MCF 10A (cell line): ENCODE measurements at regions of chr6 and their contacts with region 1.

Region 1: GRCh38 chr6:43774776-43775534 is 4.9 kb downstream of the VEGFA start:
- DNase-seq: peak; percentile 73
- H3K4me3 Mint-ChIP-seq: peak overlapping the region; percentile 98
- H3K27ac Mint-ChIP-seq: peak overlapping the region; percentile 83
- H3K4me1 Mint-ChIP-seq: peaks cover 43% of the 10 kb centered on the region
- H3K27me3 Mint-ChIP-seq: no peaks in the 10 kb centered on the region
- CTCF ChIP-seq: peak; percentile 79

Region 2: GRCh38 chr6:43723737-43724295 is 51.1 kb before region 1 on chr6:
- CTCF ChIA-PET with region 1: interaction called, 41 read pairs
- POLR2A ChIA-PET with region 1: interaction called, 55 read pairs
- intact Hi-C with region 1: loop called (anchors 1 kb)
- DNase-seq: peak; percentile 90
- H3K4me3 Mint-ChIP-seq: no peak overlapping the region
- H3K27ac Mint-ChIP-seq: no peak overlapping the region
- H3K4me1 Mint-ChIP-seq: peaks cover 31% of the 10 kb centered on the region
- H3K27me3 Mint-ChIP-seq: peaks cover 14% of the 10 kb centered on the region
- CTCF ChIP-seq: peak; percentile 66

Region 3: DNA sequence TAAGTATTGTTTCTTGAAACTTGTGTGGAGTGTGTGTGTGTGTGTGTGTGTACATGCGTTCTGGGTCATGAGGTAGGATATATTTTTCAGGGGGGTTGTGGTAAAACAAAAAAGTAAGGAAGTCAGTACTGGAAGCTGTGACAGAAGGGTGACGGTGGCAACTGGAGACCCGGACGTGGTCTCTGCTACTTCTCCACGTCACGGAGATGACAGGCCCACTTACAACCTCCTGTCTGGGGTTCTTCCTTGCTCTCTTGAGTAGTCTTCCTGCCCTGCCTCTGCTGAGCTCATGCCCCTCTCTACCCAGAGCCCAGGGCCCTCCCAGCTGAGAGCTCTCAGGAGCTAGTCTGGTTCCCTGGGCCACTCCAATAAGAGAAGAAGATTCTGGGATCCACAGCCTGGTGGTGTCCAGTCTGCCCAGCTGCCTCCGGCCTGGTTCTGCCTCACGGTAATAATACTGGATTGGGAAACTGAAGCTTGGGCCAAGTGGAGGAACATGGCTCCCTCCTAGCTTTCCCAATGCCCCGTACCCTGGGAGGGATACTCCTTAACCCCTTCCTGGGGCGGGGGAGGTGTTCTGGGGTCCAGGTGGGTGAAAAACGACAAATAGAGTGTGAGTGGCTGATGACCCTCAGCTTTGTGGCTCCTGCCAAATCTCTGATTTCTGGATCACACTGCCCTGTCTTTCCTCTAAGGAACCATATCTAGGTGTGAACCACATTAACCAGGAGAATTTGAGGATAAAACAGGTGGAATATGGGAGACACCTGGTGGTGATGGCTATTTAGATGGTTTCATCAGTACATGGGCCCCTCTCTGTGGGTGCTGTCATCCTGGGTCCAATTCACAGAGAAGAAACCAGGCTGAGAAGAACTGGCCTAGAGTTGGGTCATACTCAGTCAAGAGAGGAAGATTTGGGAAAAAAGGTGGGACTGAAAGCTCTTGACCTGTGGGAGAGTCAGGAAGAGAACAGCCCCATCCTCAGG is 22.2 kb after region 1 on chr6:
- CTCF ChIA-PET with region 1: interaction called, 65 read pairs
- POLR2A ChIA-PET with region 1: no interaction called
- intact Hi-C with region 1: no loop called
- DNase-seq: no peak
- H3K4me3 Mint-ChIP-seq: no peak overlapping the region
- H3K27ac Mint-ChIP-seq: no peak overlapping the region
- H3K4me1 Mint-ChIP-seq: peaks cover 17% of the 10 kb centered on the region
- H3K27me3 Mint-ChIP-seq: no peaks in the 10 kb centered on the region
- CTCF ChIP-seq: no peak

Region 4: DNA sequence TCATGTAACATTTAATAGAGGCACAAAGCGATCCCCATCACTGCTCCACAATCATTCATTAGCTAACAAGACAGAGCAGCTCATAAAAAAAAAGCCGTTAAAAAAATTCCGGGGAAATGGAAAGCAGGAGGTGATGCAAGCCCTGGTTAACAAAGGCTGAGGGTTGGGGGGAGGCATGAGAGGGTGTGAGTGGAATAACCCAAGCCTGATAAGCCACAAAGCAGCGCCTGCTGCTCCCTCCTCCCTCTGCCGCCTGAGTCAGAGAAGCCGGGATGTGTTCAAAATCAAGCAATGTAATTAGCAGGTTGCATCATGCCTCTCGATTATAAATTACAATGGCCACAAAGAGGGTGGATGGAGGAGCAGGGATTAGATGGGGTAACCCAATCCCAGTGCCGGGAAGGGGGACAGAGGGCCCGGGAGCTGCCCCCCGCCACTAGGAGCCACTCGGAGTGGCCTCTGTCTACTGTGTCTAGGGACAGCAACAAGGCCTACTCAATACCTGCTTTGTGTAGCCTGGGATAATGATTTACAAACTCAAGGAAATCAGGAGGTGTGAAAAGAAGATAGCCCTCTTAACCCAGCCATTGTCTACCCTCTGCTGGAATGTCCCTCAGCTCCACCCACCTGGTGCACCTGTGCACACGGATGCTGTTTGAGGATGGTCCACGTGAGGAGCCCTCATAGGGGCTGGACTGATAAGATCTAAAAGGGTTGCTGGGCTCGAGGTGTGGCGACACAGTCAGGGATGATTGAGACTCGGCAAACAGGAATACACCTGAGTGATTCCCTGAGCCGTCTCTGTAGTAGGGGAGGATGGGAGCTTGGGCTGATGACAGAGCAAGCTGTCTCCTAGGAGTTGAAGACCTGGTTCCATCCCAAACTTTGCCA is 151.9 kb after region 1 on chr6:
- CTCF ChIA-PET with region 1: interaction called, 3 read pairs
- POLR2A ChIA-PET with region 1: interaction called, 4 read pairs
- intact Hi-C with region 1: loop called (anchors 2 kb)
- DNase-seq: peak; percentile 97
- H3K4me3 Mint-ChIP-seq: no peak overlapping the region
- H3K27ac Mint-ChIP-seq: peak overlapping the region; percentile 92
- H3K4me1 Mint-ChIP-seq: peaks cover 31% of the 10 kb centered on the region
- H3K27me3 Mint-ChIP-seq: no peaks in the 10 kb centered on the region
- CTCF ChIP-seq: no peak

Region 5: GRCh38 chr6:43972913-43973300 is 198.0 kb after region 1 on chr6:
- CTCF ChIA-PET with region 1: interaction called, 3 read pairs
- POLR2A ChIA-PET with region 1: interaction called, 10 read pairs
- intact Hi-C with region 1: no loop called
- DNase-seq: peak; percentile 92
- H3K4me3 Mint-ChIP-seq: peak overlapping the region; percentile 52
- H3K27ac Mint-ChIP-seq: peak overlapping the region; percentile 80
- H3K4me1 Mint-ChIP-seq: peaks cover 41% of the 10 kb centered on the region
- H3K27me3 Mint-ChIP-seq: no peaks in the 10 kb centered on the region
- CTCF ChIP-seq: no peak

Region 6: DNA sequence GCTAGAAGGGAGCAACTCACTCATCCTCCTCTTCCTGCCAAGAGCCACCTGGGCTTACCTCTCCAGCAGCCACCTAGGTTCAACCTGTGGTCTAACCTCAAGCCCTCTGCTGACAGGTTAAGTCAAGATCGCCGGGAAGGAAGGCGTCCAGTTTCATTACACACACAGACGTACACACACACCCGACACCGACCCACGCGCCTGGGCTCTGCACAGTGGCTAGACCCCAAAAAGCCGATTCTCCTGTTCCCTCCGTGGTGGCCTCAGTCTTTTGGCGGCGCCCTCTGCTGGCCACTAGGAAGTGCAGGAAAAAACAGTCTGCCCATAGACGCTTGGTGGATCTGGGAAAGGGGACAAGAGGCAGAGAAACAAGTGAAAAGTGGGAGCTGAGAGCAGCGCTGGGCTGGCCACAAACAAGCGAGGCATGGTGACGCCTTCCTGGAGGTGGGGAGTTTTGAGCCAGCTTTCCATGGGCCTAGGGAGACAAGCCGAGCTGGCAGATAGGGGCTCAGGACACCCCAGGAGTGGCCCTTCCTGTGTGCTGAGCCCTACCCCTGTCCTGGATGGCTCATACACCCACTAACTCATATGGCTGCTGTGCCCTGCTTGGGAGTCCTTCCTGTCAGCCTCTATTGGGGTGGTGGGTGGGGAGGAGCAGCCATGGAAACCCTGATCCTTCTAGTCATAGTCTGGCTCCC is 299.6 kb after region 1 on chr6:
- CTCF ChIA-PET with region 1: interaction called, 237 read pairs
- POLR2A ChIA-PET with region 1: interaction called, 48 read pairs
- intact Hi-C with region 1: loop called (anchors 1 kb)
- DNase-seq: peak; percentile 82
- H3K4me3 Mint-ChIP-seq: peak overlapping the region; percentile 71
- H3K27ac Mint-ChIP-seq: no peak overlapping the region
- H3K4me1 Mint-ChIP-seq: peaks cover 25% of the 10 kb centered on the region
- H3K27me3 Mint-ChIP-seq: no peaks in the 10 kb centered on the region
- CTCF ChIP-seq: peak; percentile 84

Region 7: GRCh38 chr6:44203991-44204390 is 429.0 kb after region 1 on chr6:
- CTCF ChIA-PET with region 1: no interaction called
- POLR2A ChIA-PET with region 1: no interaction called
- intact Hi-C with region 1: no loop called
- DNase-seq: no peak
- H3K4me3 Mint-ChIP-seq: no peak overlapping the region
- H3K27ac Mint-ChIP-seq: no peak overlapping the region
- H3K4me1 Mint-ChIP-seq: peaks cover 20% of the 10 kb centered on the region
- H3K27me3 Mint-ChIP-seq: no peaks in the 10 kb centered on the region
- CTCF ChIP-seq: no peak

Region 8: DNA sequence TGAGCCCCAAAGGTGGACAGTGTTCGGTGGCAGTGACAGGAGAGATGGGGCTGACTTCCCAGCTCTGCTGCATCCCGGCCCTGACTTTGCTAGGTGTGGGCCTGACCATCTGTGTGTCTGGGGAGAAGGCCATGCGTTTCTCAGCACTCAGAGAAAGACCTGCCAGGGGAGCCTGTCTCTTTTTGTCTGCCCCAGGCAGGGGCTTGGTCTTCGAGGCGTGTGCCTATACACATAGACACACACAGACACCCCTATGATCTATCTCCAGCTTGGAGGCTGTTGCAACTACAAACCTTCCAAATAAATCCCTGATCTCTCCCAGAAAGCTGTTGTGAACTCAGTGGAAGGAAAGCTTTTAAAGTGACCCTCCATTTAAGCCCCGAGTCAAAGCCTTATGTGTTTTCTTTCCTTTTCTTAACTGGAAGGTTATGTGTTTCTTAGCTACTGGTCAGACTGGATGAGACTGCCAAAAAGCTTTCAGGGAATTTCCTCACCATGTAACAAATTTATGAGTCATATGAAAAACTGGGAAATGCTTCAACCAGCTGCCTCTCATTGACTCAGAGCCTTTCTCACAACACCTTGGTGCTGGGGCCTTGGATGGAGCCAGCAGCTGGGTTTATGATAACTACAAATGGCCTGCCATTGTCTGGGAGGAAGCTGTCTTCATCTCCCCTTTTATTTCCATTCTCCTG is 715.1 kb after region 1 on chr6:
- CTCF ChIA-PET with region 1: no interaction called
- POLR2A ChIA-PET with region 1: no interaction called
- intact Hi-C with region 1: no loop called
- DNase-seq: peak; percentile 95
- H3K4me3 Mint-ChIP-seq: peak overlapping the region; percentile 66
- H3K27ac Mint-ChIP-seq: peak overlapping the region; percentile 95
- H3K4me1 Mint-ChIP-seq: peaks cover 54% of the 10 kb centered on the region
- H3K27me3 Mint-ChIP-seq: no peaks in the 10 kb centered on the region
- CTCF ChIP-seq: no peak